AG04449 (cell line): ENCODE measurements at regions of chr17 and their contacts with region 1.

Region 1: DNA sequence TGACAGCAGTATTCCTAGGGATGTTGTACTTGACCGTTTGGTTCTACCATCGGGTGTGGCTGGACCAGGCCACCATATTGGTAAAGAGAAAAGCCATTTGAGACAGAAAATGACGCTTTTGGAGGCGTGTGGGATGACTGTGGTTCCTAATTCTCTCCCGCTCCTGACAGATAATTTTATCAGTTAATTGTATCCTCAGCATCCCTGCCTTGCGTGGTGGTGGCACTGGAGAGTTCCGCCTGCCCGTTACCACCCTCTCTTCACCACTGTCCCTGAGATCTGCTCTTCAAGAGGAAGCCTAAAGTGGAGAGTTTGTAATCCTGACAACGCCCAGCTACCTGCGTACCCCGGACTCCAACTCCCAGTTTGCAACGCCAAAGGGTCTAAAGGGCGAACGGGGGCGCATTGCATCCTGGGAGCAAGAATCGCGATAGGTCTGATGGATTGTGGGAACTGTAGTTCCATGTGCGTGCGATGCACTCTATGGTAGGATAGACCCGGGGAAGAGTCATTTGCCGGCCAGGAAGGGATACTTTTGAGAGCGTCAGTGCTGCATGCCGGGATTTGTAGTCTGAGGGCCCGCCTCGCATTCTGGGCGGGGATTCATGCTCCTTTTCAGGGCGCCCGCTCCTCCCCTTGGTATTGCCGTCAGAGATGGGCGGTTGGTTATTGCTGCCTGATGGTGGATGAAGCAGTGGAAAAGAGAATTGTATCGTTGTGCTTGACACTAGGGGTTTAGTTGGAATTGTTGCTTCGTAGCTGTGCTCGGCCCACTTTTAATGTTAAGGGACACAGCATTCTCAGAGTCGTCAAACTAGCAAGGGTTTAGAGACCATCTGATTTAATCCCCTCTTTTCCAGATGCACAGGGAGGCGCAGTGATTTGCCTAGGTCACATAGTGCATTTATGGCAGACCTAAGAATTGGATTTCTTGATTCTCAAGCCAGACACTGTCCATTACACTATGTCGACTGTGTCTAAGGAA is 965 bp upstream of the PHF12 start:
- DNase-seq: peak; percentile 96
- H3K4me3 ChIP-seq: peak overlapping the region; percentile 76
- CTCF ChIP-seq: no peak

Region 2: GRCh38 chr17:28643983-28644549 is 308.2 kb before region 1 on chr17:
- CTCF ChIA-PET with region 1: no interaction called
- POLR2A ChIA-PET with region 1: no interaction called
- DNase-seq: no peak
- H3K4me3 ChIP-seq: peak overlapping the region; percentile 93
- CTCF ChIP-seq: peak; percentile 28

Region 3: GRCh38 chr17:28720247-28720996 is 231.9 kb before region 1 on chr17:
- CTCF ChIA-PET with region 1: interaction called, 155 read pairs
- POLR2A ChIA-PET with region 1: interaction called, 14 read pairs
- DNase-seq: no peak
- H3K4me3 ChIP-seq: peak overlapping the region; percentile 97
- CTCF ChIP-seq: no peak

Region 4: DNA sequence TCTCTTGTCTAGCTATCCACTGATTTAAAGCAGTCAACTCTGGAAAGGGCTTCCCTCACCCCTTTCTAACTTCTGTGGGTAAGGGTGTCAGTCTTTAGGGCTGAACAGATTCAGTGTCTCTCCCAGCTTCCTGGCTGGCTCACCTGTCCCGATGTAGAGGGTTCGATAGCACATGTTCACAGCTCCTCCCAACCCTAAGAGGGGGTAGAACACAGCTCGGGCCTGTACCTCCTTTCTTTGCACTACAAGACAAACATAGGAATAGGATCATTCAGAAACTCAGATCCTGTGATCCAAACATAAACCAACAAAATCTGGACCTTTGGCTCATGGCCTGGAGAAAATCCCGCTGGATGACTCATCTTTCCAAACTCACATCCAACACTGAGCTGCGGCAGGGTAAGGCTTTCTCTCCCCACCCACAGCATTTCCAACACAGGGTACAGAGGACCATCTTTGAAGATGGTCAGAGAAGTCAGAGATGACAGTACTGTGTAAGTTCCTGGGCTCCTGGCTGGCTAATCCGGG is 43.6 kb before region 1 on chr17:
- CTCF ChIA-PET with region 1: interaction called, 11 read pairs
- POLR2A ChIA-PET with region 1: no interaction called
- DNase-seq: no peak
- H3K4me3 ChIP-seq: no peak overlapping the region
- CTCF ChIP-seq: no peak

Region 5: DNA sequence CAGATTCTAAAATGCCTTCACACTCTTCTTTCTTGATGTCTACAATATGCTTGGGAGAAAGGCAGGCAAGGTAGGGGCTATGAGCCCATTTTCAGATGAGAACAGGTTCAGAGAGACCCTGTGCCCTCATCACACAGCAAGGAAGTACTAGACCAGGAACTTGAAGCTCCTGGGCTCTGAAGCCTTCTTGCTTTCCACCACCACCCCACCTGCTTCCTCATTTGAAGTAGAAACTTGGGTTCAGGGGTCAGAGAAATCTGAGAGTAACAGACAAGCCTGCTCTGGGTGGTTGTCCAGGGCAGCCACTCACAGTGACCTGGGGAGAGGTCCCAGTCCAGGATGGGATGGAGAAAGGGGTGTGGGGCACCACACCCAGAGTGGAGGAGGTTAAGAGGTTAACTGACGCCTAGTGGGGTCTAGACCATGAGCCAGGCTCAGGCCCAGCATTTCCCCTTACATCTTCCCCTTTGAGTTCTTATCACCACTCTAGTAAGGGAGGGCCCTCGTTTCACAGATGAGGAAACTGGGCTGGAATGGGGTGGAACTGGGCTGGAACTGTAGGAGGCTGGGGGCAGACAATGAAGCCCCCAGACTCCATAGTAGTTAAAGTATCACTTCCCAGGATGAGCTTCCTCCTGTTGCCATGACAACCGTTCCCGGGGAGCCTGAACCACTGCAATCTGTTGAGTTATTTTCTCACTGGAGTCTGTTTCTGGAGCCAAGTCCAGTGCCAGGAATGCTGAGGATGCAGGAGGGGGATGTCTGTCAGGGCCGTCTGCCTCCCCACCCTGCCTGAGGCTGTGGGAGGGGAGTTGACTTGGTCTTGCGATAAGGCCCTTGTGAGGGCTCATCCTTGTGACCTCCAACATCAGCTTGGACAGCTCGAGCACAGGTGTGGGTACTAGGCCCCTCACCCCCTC is 15.2 kb after region 1 on chr17:
- CTCF ChIA-PET with region 1: interaction called, 132 read pairs
- POLR2A ChIA-PET with region 1: interaction called, 5 read pairs
- DNase-seq: no peak
- H3K4me3 ChIP-seq: no peak overlapping the region
- CTCF ChIP-seq: no peak

Region 6: DNA sequence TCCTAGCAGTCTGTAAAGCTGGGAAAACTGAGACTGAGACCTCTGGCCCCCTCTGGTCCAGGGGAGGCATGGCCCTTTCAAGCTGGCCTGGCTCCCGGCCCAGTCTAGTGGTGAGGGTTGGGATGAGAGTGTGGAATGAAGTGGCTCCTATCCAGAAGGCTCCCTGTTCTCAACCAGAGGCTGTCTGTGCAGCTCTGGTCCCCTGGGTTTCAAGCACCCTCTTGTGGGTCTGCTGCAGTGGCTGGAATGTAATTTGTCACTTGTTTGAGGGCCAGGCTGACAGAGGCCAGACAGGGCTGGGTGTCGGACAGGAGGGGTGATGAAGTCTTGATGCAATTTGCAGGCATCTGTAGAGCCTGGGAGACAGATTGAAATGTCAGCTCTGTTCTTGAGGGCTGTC is 21.1 kb after region 1 on chr17:
- CTCF ChIA-PET with region 1: interaction called, 16 read pairs
- POLR2A ChIA-PET with region 1: no interaction called
- DNase-seq: no peak
- H3K4me3 ChIP-seq: no peak overlapping the region
- CTCF ChIP-seq: peak; percentile 9

Region 7: DNA sequence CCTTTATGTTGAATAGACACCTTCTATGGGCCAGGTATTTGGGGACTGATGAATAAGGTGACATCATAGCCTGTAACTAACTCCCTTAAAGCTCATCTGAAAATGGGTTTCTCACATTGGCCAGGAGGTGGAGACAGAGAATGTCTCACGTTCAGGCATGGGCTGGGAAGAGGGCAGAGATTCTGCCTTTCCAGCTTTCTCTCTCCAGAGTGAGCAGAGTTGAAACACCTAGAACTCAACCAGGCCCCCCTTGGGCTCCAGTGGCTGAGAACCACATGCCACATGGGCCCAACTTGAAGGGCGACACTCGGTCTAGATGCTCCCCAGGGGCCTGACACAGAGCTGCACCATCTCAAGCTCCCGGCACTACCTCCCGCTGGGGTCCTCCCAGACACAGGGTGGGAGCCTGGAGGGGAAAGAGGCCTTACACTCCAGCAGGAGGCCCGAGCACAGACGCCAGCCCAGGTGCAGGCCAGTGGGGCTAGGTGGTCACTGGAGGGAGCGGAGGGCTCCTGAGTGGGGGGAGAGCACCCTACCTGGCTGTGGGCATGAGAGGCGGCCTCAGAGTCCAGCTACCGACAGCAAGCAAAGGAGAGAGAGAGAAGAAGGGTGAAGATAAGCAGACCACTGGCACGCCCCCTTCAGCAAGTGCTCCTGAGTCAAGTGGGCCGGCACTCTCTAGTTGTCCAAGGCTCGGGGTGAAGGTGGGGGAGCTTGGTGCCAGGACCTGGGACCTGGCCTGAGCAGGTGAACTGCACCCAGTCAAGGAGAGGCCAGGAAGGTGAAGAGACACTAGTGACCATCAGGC is 172.0 kb after region 1 on chr17:
- CTCF ChIA-PET with region 1: interaction called, 1,065 read pairs
- POLR2A ChIA-PET with region 1: no interaction called
- DNase-seq: no peak
- H3K4me3 ChIP-seq: no peak overlapping the region
- CTCF ChIP-seq: peak; percentile 72

Region 8: DNA sequence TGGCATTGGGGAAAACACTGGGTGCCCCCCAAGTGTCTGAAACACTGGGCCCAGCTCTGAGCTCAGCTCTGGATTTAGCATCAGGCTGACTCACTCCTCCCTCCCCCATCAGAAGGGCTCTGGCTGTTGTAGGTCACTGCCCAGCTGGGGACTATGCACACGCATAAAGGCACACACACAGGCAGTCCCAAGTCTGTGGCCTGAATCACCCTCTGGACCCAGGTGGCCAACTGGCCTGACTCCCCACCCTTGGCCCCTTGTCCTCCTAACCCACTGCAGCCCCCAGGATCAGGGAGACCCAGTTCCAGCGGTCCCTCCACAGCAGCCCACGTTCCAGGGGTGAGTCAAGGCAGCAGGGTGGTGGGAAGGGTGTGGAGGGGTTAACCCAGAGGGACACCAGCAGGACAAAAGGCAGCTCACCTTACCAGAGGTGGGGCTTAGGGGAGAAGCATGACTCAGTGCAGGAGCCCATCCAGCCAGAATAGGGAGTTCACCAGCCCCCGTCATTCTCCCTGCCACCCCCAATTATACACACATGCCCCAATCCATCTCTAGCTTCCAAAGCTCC is 180.9 kb after region 1 on chr17:
- CTCF ChIA-PET with region 1: interaction called, 12 read pairs
- POLR2A ChIA-PET with region 1: no interaction called
- DNase-seq: no peak
- H3K4me3 ChIP-seq: no peak overlapping the region
- CTCF ChIP-seq: no peak